ENCODE measurements at regions of chr10 and their contacts with region 1.

Region 1: GRCh38 chr10:128102480-128103228 is 23.6 kb downstream of the MKI67 start:
- H3K4me3 ChIP-seq: no peak overlapping the region
- H3K27ac ChIP-seq: no peak overlapping the region
- H3K4me1 ChIP-seq: no peaks in the 10 kb centered on the region
- CTCF ChIP-seq: no peak

Region 2: GRCh38 chr10:128116851-128117615 is 14.4 kb after region 1 on chr10:
- CTCF ChIA-PET with region 1: interaction called, 14 read pairs
- POLR2A ChIA-PET with region 1: no interaction called
- H3K4me3 ChIP-seq: no peak overlapping the region
- H3K27ac ChIP-seq: no peak overlapping the region
- H3K4me1 ChIP-seq: no peaks in the 10 kb centered on the region
- CTCF ChIP-seq: no peak

Region 3: DNA sequence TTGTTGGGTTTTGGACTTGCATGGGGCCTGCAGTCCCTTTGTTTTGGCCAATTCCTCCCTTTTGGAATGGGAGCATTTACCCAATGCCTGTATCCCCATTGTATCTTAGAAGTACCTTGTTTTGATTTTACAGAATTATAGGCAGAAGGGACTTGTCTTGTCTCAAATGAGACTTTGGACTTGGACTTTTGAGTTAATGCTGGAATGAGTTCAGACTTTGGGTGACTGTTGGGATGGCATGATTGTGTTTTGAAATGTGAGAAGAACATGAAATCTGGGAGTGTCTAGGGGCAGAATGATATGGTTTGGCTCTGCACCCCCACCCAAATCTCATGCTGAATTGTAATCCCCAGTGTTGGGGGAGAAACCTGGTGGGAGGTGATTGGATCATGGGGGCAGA is 100.4 kb after region 1 on chr10:
- CTCF ChIA-PET with region 1: no interaction called
- POLR2A ChIA-PET with region 1: no interaction called
- H3K4me3 ChIP-seq: no peak overlapping the region
- H3K27ac ChIP-seq: no peak overlapping the region
- H3K4me1 ChIP-seq: no peaks in the 10 kb centered on the region
- CTCF ChIP-seq: no peak

Region 4: GRCh38 chr10:128337860-128338378 is 235.3 kb after region 1 on chr10:
- CTCF ChIA-PET with region 1: no interaction called
- POLR2A ChIA-PET with region 1: no interaction called
- H3K4me3 ChIP-seq: no peak overlapping the region
- H3K27ac ChIP-seq: no peak overlapping the region
- H3K4me1 ChIP-seq: no peaks in the 10 kb centered on the region
- CTCF ChIP-seq: no peak